Caco-2 (cell line): ENCODE measurements at regions of chr11 and their contacts with region 1.

Region 1: DNA sequence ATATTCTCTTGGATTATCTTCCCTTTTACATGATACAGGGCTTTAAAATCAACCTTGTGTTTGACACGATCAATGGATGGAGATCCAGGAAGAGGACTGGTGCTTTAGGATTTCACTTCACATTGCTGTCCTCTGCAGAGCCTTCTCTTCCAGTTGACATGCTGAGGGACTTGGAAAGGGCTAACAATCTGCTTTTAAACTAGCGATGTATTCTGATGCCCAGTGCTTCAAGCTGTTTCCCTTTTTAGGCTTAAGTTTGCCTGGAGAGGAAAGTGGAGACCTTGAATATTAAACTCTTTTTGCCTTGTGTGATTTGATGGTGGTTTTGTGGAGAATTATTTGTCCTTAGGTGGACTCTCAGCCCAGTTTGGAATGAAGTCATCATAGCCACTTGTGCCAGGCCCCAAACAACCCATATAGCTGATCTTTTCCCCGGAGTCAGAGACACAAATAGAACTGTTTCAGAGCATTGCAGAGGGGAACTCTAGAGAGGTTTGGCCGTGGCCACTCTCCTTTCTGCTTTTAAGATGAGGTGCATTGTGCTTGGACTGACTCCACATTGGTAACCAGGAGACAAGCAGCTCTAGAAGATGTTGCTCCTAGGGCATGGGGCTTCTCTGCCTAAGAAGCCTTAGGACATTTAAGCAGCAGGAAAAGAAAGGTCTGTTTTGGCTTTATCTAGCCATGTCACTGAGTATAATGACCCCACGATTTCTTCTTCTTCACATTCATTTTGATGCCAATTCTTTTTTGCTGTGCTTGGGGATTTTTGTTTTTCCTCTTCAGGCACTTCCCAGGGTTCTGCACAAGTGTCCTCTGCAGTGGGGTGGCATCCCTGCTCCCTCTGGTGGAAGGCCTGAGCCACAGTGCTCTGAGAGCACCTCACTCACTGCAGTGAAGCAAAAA is 152.8 kb downstream of the NCAM1 start:
- DNase-seq: peak; percentile 71
- H3K4me3 ChIP-seq: no peak overlapping the region
- H3K4me3 Mint-ChIP-seq: no peak overlapping the region
- H3K27ac Mint-ChIP-seq: no peak overlapping the region
- H3K4me1 ChIP-seq: no peaks in the 10 kb centered on the region
- H3K4me1 Mint-ChIP-seq: no peaks in the 10 kb centered on the region
- H3K27me3 ChIP-seq: 0 out of 2 replicates have a peak, but pooled peaks cover 1% of the 10 kb centered on the region
- H3K27me3 Mint-ChIP-seq: peaks cover 27% of the 10 kb centered on the region
- CTCF ChIP-seq: peak; percentile 86 to 98

Region 2: DNA sequence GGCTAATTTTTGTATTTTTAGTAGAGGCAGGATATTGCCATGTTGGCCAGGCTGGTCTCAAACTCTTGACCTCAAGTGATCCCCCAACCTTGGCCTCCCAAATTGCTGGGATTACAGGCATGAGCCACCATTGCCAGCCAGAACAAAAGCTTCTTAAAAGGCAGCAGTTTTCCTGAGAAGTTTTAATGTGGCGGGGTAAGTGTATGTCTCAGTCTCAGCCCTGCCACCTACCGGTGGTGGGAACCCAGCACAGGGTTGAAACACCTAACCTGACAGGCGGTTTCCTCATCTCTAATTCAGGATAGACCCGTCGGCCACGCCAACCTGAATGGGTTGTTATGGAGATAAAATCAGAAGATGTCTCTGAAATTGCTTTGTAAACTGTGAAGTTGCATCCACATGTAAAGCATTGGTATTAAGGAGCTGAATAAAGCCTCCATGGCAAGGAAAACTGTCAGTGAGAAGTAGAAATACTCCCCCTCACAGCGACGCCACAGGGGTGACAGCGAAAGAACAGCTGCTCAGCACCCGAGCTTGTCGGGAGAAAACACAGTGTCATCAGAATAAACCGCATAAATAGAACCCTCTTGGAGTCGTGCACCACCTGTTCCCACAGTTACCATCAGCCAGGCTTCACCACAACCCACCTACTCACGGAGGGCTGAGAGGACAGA is 318.8 kb before region 1 on chr11:
- CTCF ChIA-PET with region 1: interaction called, 5 read pairs
- POLR2A ChIA-PET with region 1: no interaction called
- intact Hi-C with region 1: loop called (anchors 1 kb)
- DNase-seq: peak; percentile 66 to 76
- H3K4me3 ChIP-seq: no peak overlapping the region
- H3K4me3 Mint-ChIP-seq: no peak overlapping the region
- H3K27ac Mint-ChIP-seq: no peak overlapping the region
- H3K4me1 ChIP-seq: no peaks in the 10 kb centered on the region
- H3K4me1 Mint-ChIP-seq: no peaks in the 10 kb centered on the region
- H3K27me3 ChIP-seq: peaks cover 2% of the 10 kb centered on the region
- H3K27me3 Mint-ChIP-seq: peaks cover 19% of the 10 kb centered on the region
- CTCF ChIP-seq: peak; percentile 89

Region 3: DNA sequence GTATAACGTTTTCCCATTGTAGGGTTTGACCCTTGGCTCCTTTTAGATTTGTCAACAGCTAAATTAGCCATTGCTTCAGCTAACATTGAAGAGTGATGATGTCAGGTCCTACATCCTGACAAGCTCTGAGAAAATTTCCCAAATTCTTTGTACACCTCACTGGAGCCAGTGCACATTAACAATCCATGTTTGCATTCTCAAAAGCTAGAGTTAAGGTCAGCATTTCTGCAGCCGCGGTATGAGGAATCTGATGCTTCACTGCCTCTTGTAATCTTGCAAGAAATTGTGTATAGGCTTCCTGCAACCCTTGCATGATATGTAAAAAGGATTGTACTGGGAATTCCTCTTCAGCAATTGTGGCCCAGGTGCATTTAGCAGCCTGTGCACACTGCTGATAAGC is 185.9 kb before region 1 on chr11:
- CTCF ChIA-PET with region 1: interaction called, 4 read pairs
- POLR2A ChIA-PET with region 1: no interaction called
- intact Hi-C with region 1: loop called (anchors 10 kb)
- DNase-seq: no peak
- H3K4me3 ChIP-seq: no peak overlapping the region
- H3K4me3 Mint-ChIP-seq: no peak overlapping the region
- H3K27ac Mint-ChIP-seq: no peak overlapping the region
- H3K4me1 ChIP-seq: no peaks in the 10 kb centered on the region
- H3K4me1 Mint-ChIP-seq: no peaks in the 10 kb centered on the region
- H3K27me3 ChIP-seq: no peaks in the 10 kb centered on the region; the same call in 1 of the 2 replicates
- H3K27me3 Mint-ChIP-seq: peaks cover 36% of the 10 kb centered on the region
- CTCF ChIP-seq: no peak